Activated T-helper 1 cell treated with anti-CD3 and anti-CD28 coated beads, Interleukin-12 subunit alpha, Interleukin-12 subunit beta, Interleukin-2, Interleukin-4 antibody, amounts not matched to agents 30 ng/mL and 10 ng/mL and 1 ng/mL, durations not matched to agents 14 hours and 24 hours and 36 hours (primary cell): ENCODE measurements at regions of chr17 and their contacts with region 1.

Region 1: DNA sequence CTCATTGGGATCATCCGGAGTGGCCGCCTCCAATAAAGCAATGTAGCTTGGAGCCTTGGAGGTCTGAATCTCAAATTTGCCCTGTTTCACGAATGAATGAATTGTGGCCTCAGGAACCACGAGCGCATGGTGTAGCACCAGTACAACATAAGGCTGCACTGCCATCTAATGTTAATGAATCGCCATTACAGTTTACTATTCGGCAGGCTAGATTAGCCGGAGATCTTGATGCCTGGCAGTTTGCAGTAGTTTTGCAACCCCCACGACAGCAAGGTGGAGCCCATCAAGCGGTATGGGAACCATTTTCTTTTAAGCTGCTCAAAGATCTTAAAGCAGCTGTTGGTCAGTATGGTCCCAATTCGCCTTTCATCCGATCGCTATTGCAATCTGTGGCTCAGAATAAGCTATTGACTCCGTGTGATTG is 18.8 kb downstream of the ALOX15B start:
- DNase-seq: peak; percentile 26
- H3K4me3 Mint-ChIP-seq: no peak overlapping the region
- H3K27ac Mint-ChIP-seq: no peak overlapping the region
- H3K4me1 Mint-ChIP-seq: peaks cover 27% of the 10 kb centered on the region
- H3K27me3 Mint-ChIP-seq: peaks cover 50% of the 10 kb centered on the region

Region 2: DNA sequence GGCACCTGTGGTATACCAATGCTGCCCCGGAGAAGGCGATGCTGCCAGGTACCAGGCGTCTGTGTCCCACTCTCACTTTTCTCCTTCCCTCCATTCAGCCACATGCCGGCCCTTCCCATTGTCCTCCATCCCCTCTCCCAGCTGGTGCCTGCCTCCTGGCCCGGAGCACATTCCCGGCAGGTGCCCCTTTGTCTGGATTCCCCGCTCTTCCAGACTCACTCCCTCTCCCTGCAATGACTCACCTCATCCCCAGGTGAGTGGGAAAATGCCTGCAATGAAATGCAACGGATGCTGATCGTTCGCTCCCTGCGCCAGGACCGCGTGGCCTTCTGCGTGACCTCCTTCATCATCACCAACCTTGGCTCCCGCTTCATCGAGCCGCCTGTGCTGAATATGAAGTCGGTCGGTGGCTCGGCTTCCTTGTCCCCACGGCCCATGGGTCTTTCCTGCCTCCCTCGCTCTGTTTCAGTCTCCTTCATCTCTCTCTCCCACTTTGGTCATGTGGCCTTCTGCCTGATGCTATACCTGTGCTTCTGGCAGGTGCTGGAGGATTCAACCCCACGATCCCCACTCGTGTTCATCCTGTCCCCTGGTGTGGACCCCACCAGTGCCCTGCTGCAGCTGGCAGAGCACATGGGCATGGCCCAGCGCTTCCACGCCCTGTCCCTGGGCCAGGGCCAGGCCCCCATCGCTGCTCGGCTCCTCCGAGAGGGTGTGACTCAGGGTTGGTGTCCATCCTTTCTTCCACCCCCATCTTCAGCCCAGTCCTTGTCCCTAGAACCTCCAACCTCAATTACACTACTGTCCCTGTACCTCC is 233.9 kb before region 1 on chr17:
- intact Hi-C with region 1: loop called (anchors 1 kb)
- DNase-seq: no peak
- H3K4me3 Mint-ChIP-seq: no peak overlapping the region
- H3K27ac Mint-ChIP-seq: no peak overlapping the region
- H3K4me1 Mint-ChIP-seq: peaks cover 8% of the 10 kb centered on the region
- H3K27me3 Mint-ChIP-seq: peaks cover 18% of the 10 kb centered on the region

Region 3: DNA sequence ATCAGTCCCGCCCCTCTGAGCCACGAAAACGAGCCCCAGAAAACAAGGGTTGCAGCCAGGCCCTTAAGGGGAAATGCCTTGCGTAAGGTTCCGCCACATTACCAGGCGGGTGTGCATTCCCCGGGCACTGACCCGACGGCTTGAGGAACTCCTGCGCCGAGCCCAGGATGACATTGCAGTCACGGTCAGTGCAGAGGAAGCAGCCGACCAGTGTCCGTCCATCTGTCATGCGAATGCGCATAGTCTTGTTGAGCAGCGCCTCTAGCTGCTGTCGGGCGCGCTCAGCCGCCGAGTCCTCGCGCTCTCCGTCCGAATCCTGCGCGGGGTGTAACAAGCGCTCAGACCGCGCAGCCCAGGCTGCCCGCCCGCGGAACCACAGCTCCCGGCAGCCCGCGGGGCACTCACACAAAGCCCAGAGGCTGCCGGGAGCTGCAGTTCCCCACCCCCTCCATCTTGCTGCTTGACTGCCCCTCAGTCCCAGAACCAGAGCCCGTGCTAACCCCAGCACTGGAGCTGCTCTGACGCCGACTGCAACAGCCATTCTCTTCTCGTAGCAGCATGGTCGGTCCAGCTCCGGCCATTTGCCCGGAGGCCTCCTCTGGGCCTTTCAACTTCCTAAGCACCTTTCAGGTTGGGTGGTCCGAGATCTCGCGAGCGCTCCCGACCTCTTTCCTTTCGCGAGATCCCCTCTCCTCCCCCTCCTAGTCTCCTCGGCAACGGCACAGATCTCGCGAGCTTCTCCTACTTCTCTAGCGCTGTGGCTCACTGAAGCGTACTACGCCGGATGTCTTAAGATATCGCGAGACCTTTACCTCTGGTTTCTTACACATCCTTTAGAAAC is 200.6 kb before region 1 on chr17 and contains the start of gene NAA38:
- intact Hi-C with region 1: loop called (anchors 5 kb)
- DNase-seq: peak; percentile 92
- H3K4me3 Mint-ChIP-seq: no peak within 1 kb of the TSS
- H3K27ac Mint-ChIP-seq: no peak within 1 kb of the TSS
- H3K4me1 Mint-ChIP-seq: no peaks in the 10 kb centered on the region
- H3K27me3 Mint-ChIP-seq: no peaks in the 10 kb centered on the region
- total RNA-seq, gene NAA38: 36.4 and 43.5 TPM in 2 replicates

Region 4: GRCh38 chr17:7972131-7972785 is 85.4 kb before region 1 on chr17:
- intact Hi-C with region 1: no loop called
- DNase-seq: no peak
- H3K4me3 Mint-ChIP-seq: no peak overlapping the region
- H3K27ac Mint-ChIP-seq: no peak overlapping the region
- H3K4me1 Mint-ChIP-seq: no peaks in the 10 kb centered on the region
- H3K27me3 Mint-ChIP-seq: peaks cover 5% of the 10 kb centered on the region

Region 5: GRCh38 chr17:7989781-7990655 is 67.7 kb before region 1 on chr17:
- intact Hi-C with region 1: loop called (anchors 1 kb)
- DNase-seq: peak; percentile 86
- H3K4me3 Mint-ChIP-seq: peak overlapping the region; percentile 76
- H3K27ac Mint-ChIP-seq: peak overlapping the region; percentile 67
- H3K4me1 Mint-ChIP-seq: peaks cover 21% of the 10 kb centered on the region
- H3K27me3 Mint-ChIP-seq: peaks cover 9% of the 10 kb centered on the region

Region 6: DNA sequence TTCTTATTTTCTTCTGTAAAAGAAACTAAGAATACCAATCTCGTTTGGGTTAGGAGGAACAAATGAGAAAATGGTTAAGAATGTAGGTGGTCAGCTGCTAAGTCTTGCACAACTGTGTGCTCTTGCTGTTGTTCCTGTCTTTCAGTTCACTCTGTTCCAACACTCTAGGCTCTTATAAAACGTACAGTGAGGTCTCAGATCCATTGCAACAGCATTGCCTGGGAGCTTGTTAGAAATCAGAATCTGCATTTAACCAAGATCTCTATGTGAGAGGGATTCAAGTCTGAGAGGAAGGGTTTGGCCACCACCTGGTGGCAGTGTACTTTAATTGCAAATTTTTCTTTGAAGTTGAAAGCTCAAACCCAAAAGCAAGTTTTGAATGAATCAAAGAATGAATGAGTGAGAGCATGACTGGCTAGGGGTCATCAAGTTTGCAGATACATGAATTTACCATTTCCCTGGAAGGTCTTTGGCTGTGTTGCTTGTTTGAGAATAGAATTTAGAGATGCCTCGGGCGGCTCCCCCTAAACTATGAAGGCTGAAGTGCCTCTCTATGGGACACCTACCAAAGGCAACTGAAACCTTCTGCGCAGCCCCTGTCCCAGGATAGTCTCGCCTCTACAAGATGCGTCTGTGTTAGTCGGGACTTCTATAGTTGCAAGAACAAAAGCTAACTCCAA is 16.3 kb before region 1 on chr17:
- intact Hi-C with region 1: loop called (anchors 1 kb)
- DNase-seq: peak; percentile 20
- H3K4me3 Mint-ChIP-seq: no peak overlapping the region
- H3K27ac Mint-ChIP-seq: no peak overlapping the region
- H3K4me1 Mint-ChIP-seq: no peaks in the 10 kb centered on the region
- H3K27me3 Mint-ChIP-seq: peaks cover 26% of the 10 kb centered on the region

Region 7: GRCh38 chr17:8109661-8110464 is 52.2 kb after region 1 on chr17:
- intact Hi-C with region 1: loop called (anchors 1 kb)
- DNase-seq: peak; percentile 68
- H3K4me3 Mint-ChIP-seq: no peak overlapping the region
- H3K27ac Mint-ChIP-seq: no peak overlapping the region
- H3K4me1 Mint-ChIP-seq: no peaks in the 10 kb centered on the region
- H3K27me3 Mint-ChIP-seq: peaks cover 40% of the 10 kb centered on the region